Activated CD4-positive, alpha-beta memory T cell treated with anti-CD3 and anti-CD28 coated beads, Interleukin-2, amount 10 ng/mL, durations not matched to agents 7 days and 5 days (primary cell): ENCODE measurements at regions of chr6 and their contacts with region 1.

Region 1: GRCh38 chr6:29016559-29017427 is 11.7 kb upstream of the ZNF311 start:
- DNase-seq: peak; percentile 86
- H3K4me3 Mint-ChIP-seq: peak overlapping the region; percentile 81
- H3K27ac Mint-ChIP-seq: peak overlapping the region; percentile 80
- H3K4me1 Mint-ChIP-seq: peaks cover 18% of the 10 kb centered on the region
- H3K27me3 Mint-ChIP-seq: peaks cover 5% of the 10 kb centered on the region

Region 2: DNA sequence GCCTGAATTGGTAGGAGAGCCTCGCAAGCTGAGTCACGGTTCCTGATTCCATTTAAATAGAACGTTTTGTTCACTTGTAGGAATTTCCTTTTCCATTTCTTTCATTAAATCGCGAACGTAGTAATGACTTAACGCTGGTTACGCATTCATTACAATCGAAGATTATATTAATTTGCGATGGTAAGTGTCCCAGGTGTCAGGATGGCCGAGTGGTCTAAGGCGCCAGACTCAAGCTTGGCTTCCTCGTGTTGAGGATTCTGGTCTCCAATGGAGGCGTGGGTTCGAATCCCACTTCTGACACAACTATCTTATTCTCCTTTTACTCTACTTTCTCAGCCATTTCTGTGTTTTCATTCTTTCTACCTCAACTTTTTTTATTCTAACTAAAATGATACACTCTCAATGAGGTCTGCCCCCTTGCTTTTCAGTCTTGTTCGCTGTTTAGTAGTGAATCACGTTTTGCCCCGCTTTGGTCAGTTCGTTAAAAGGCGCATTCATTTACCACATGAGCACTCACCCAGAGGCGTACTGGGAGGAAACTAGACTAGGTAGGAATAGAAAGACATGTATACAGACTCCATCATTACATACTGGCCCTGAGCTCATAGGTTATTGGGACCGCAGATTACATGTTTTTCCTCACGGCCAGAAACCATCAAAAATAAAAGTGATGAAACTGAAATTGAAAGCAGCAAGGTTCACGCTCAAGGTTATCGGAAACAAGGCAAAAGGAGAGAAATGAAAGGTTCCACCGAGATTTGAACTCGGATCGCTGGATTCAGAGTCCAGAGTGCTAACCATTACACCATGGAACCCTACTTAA is 75.7 kb before region 1 on chr6:
- CTCF ChIA-PET with region 1: interaction called, 12 read pairs
- POLR2A ChIA-PET with region 1: interaction called, 4 read pairs
- DNase-seq: peak; percentile 78
- H3K4me3 Mint-ChIP-seq: peak overlapping the region; percentile 88
- H3K27ac Mint-ChIP-seq: peak overlapping the region; percentile 93
- H3K4me1 Mint-ChIP-seq: peaks cover 51% of the 10 kb centered on the region
- H3K27me3 Mint-ChIP-seq: no peaks in the 10 kb centered on the region

Region 3: GRCh38 chr6:28981833-28982475 is 34.8 kb before region 1 on chr6:
- CTCF ChIA-PET with region 1: interaction called, 29 read pairs
- POLR2A ChIA-PET with region 1: interaction called, 5 read pairs
- DNase-seq: peak; percentile 73
- H3K4me3 Mint-ChIP-seq: peak overlapping the region; percentile 86
- H3K27ac Mint-ChIP-seq: peak overlapping the region; percentile 77
- H3K4me1 Mint-ChIP-seq: peaks cover 56% of the 10 kb centered on the region
- H3K27me3 Mint-ChIP-seq: peaks cover 45% of the 10 kb centered on the region

Region 4: GRCh38 chr6:29005183-29005885 is 11.5 kb before region 1 on chr6 and contains the start of gene ZNF311:
- CTCF ChIA-PET with region 1: interaction called, 11 read pairs
- POLR2A ChIA-PET with region 1: interaction called, 6 read pairs
- DNase-seq: peak; percentile 61
- H3K4me3 Mint-ChIP-seq: peak within 1 kb of the TSS; percentile 80
- H3K27ac Mint-ChIP-seq: peak within 1 kb of the TSS; percentile 84
- H3K4me1 Mint-ChIP-seq: peaks cover 27% of the 10 kb centered on the region
- H3K27me3 Mint-ChIP-seq: peaks cover 5% of the 10 kb centered on the region
- total RNA-seq, gene ZNF311: 0.53 to 0.65 TPM

Region 5: GRCh38 chr6:30862156-30862875 is 1845.5 kb after region 1 on chr6:
- CTCF ChIA-PET with region 1: no interaction called
- POLR2A ChIA-PET with region 1: no interaction called
- DNase-seq: no peak
- H3K4me3 Mint-ChIP-seq: no peak overlapping the region
- H3K27ac Mint-ChIP-seq: no peak overlapping the region
- H3K4me1 Mint-ChIP-seq: no peaks in the 10 kb centered on the region
- H3K27me3 Mint-ChIP-seq: peaks cover 4% of the 10 kb centered on the region